Activated T-helper 1 cell treated with anti-CD3 and anti-CD28 coated beads, Interleukin-12 subunit alpha, Interleukin-12 subunit beta, Interleukin-2, Interleukin-4 antibody, amounts not matched to agents 30 ng/mL and 10 ng/mL and 1 ng/mL, durations not matched to agents 14 hours and 24 hours and 36 hours (primary cell): ENCODE measurements at regions of chr21 and their contacts with region 1.

Region 1: GRCh38 chr21:38219049-38219628 is 37.7 kb upstream of the KCNJ15 start:
- DNase-seq: peak; percentile 31
- H3K4me3 Mint-ChIP-seq: no peak overlapping the region
- H3K27ac Mint-ChIP-seq: peak overlapping the region; percentile 45
- H3K4me1 Mint-ChIP-seq: peaks cover 8% of the 10 kb centered on the region
- H3K27me3 Mint-ChIP-seq: peaks cover 2% of the 10 kb centered on the region

Region 2: GRCh38 chr21:38159355-38159754 is 59.8 kb before region 1 on chr21:
- intact Hi-C with region 1: loop called (anchors 5 kb)
- DNase-seq: peak; percentile 25
- H3K4me3 Mint-ChIP-seq: no peak overlapping the region
- H3K27ac Mint-ChIP-seq: no peak overlapping the region
- H3K4me1 Mint-ChIP-seq: no peaks in the 10 kb centered on the region
- H3K27me3 Mint-ChIP-seq: peaks cover 10% of the 10 kb centered on the region

Region 3: GRCh38 chr21:38170280-38170679 is 48.9 kb before region 1 on chr21:
- intact Hi-C with region 1: loop called (anchors 5 kb)
- DNase-seq: no peak
- H3K4me3 Mint-ChIP-seq: no peak overlapping the region
- H3K27ac Mint-ChIP-seq: no peak overlapping the region
- H3K4me1 Mint-ChIP-seq: no peaks in the 10 kb centered on the region
- H3K27me3 Mint-ChIP-seq: no peaks in the 10 kb centered on the region

Region 4: GRCh38 chr21:38239672-38240071 is 20.5 kb after region 1 on chr21:
- intact Hi-C with region 1: no loop called
- DNase-seq: no peak
- H3K4me3 Mint-ChIP-seq: no peak overlapping the region
- H3K27ac Mint-ChIP-seq: no peak overlapping the region
- H3K4me1 Mint-ChIP-seq: peaks cover 12% of the 10 kb centered on the region
- H3K27me3 Mint-ChIP-seq: no peaks in the 10 kb centered on the region

Region 5: GRCh38 chr21:38300141-38300578 is 81.0 kb after region 1 on chr21:
- intact Hi-C with region 1: loop called (anchors 2 kb)
- DNase-seq: no peak
- H3K4me3 Mint-ChIP-seq: peak overlapping the region; percentile 23
- H3K27ac Mint-ChIP-seq: no peak overlapping the region
- H3K4me1 Mint-ChIP-seq: peaks cover 28% of the 10 kb centered on the region
- H3K27me3 Mint-ChIP-seq: no peaks in the 10 kb centered on the region